SK-N-SH (cell line): ENCODE measurements at regions of chr3 and their contacts with region 1.

Region 1: GRCh38 chr3:45224824-45225464 is 1.1 kb downstream of the TMEM158 start:
- DNase-seq: peak; percentile 95
- H3K4me3 ChIP-seq: peak overlapping the region; percentile 68 to 86
- H3K27ac ChIP-seq: peak overlapping the region in 1 of 2 experiments; percentile 71; a peak in 2 of 4 replicates
- H3K4me1 ChIP-seq: peaks cover 0 to 7% of the 10 kb centered on the region in 2 experiments; a peak in 3 of 4 replicates
- H3K27me3 ChIP-seq: no peaks in the 10 kb centered on the region
- CTCF ChIP-seq: peak; percentile 59
- EP300 ChIP-seq: 0 out of 4 replicates have a peak, but pooled peaks of 1 of the 2 experiments have one; percentile 19
- RAD21 ChIP-seq: peak; percentile 88

Region 2: DNA sequence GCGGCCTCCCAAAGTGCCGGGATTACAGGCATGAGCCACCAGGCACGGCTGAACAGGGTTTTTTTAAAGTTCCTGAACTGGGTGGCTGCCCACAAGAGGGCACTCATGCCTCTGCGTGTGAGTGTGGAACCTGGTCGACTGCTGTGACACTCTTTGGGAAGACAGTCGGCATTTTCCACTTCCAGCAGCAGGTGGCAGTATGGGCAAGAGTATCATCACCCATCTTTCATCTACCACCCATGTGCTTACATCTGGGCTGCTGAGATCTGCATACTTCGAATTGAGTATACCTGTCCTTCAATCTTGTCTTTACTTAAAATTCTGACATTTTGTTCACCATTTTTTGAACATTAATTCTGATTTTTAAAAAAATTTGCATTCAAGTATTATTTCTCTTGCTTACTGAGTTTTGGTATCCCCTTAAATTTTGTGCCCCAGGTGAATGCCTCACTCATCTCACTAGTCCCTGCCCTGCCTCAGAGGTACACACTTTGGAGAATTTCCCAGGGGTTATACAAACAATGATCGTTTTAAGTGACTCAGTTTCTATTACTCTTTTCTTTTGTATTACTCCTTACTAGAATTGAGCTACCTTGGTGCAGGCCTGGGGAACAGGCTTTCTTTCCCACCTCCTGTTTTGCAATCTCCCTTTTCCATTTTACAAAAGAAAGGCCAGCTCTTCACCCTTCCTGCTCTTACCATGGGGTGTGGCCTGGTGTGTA is 187.0 kb before region 1 on chr3:
- CTCF ChIA-PET with region 1: interaction called, 631 read pairs
- POLR2A ChIA-PET with region 1: no interaction called
- DNase-seq: peak; percentile 90
- H3K4me3 ChIP-seq: peak overlapping the region in 1 of 2 experiments; percentile 32; a peak in 1 of 4 replicates
- H3K27ac ChIP-seq: no peak overlapping the region
- H3K4me1 ChIP-seq: no peaks in the 10 kb centered on the region; a peak in 1 of 4 replicates
- H3K27me3 ChIP-seq: no peaks in the 10 kb centered on the region
- CTCF ChIP-seq: peak; percentile 98
- EP300 ChIP-seq: no peak
- RAD21 ChIP-seq: peak; percentile 96

Region 3: GRCh38 chr3:45092132-45093031 is 132.6 kb before region 1 on chr3:
- CTCF ChIA-PET with region 1: no interaction called
- POLR2A ChIA-PET with region 1: no interaction called
- DNase-seq: no peak
- H3K4me3 ChIP-seq: no peak overlapping the region
- H3K27ac ChIP-seq: peak overlapping the region in 1 of 2 experiments; percentile 50; a peak in 3 of 4 replicates
- H3K4me1 ChIP-seq: no peaks in the 10 kb centered on the region
- H3K27me3 ChIP-seq: no peaks in the 10 kb centered on the region
- CTCF ChIP-seq: peak; percentile 16; the same call in 1 of the 2 replicates
- EP300 ChIP-seq: 0 out of 4 replicates have a peak, but pooled peaks of 1 of the 2 experiments have one; percentile 29
- RAD21 ChIP-seq: no peak

Region 4: DNA sequence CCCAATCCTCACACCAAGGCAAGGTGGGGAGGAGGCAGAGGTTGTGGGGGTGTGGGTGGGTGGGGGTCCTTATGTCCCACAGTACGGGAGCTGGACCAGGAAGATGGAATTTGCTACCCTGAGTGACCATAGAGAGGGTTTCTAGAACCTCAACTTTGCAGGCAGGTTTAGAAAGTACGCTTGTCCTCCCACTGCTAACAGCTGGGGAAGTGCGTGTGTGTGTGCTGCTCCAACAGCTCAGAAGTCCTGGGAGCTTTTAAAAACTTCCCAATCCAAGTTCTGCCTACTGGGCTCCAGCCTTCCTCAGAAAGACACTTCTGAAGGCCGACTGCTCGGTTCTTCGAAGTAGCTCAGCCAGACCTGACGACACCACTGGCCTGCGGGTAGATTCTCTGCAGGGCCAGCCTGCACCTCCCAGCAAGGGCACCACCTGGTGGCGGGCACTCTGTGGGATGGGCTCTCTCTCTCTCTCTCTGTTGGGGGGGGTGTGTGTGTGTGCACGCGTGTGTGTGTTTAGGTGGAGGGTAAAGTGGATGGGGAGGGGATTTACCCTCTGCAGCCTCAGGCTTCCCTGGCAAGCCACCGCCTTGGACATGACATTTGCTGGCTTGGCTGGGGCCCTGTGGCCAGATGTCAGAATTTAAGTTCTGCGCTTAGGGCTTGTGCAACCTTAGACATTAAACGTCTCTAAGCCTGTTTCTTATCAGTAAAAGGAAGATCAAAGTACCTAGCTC is 14.5 kb before region 1 on chr3:
- CTCF ChIA-PET with region 1: interaction called, 51 read pairs
- POLR2A ChIA-PET with region 1: no interaction called
- DNase-seq: peak; percentile 75
- H3K4me3 ChIP-seq: no peak overlapping the region; a peak in 1 of 4 replicates
- H3K27ac ChIP-seq: no peak overlapping the region
- H3K4me1 ChIP-seq: peaks cover 0 to 9% of the 10 kb centered on the region in 2 experiments; a peak in 1 of 4 replicates
- H3K27me3 ChIP-seq: no peaks in the 10 kb centered on the region
- CTCF ChIP-seq: peak; percentile 89
- EP300 ChIP-seq: no peak; a peak in 1 of 4 replicates
- RAD21 ChIP-seq: peak; percentile 81

Region 5: DNA sequence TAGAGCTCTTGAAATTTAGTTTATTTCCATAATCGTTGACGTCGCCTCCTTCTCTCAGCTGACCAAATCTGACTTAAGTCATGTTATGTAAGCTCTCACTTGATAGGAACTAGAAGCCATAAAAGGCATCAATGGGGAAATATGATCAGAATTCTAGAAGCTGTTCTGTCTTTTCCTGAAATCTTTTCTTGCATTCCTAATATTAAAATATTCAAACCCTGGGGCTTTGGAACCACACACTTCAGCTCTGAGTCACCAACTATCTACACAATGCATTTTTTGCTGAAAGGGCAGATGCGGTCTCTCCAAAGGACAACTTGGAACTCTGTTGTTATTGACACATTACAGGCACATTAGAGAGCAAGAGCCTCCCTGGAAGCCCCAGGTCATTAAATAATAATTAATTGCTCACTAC is 254.7 kb after region 1 on chr3:
- CTCF ChIA-PET with region 1: interaction called, 15 read pairs
- POLR2A ChIA-PET with region 1: no interaction called
- DNase-seq: no peak
- H3K4me3 ChIP-seq: no peak overlapping the region
- H3K27ac ChIP-seq: peak overlapping the region; percentile 15 to 28; a peak in 2 of 4 replicates
- H3K4me1 ChIP-seq: peaks cover 0 to 6% of the 10 kb centered on the region in 2 experiments; a peak in 2 of 4 replicates
- H3K27me3 ChIP-seq: no peaks in the 10 kb centered on the region
- CTCF ChIP-seq: no peak
- EP300 ChIP-seq: no peak
- RAD21 ChIP-seq: no peak

Region 6: DNA sequence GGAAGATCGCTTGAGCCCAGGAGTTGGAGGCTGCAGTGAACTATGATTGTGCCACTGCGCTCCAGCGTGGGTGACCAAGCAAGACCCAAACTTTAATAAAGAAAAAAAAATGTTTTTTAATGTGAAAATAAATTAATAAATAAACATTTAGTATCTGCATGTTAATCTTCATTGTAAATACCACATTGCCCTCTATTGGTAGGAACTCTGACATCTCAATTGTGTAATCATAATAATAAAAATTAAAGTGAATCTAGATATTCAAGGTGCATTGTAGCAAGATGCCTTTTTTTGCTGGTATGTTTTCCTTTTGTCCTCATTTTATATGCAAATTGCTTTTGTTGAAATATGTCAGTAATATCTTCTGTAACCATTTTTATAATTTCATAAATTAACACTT is 274.6 kb after region 1 on chr3:
- CTCF ChIA-PET with region 1: interaction called, 100 read pairs
- POLR2A ChIA-PET with region 1: interaction called, 4 read pairs
- DNase-seq: peak; percentile 51
- H3K4me3 ChIP-seq: no peak overlapping the region
- H3K27ac ChIP-seq: no peak overlapping the region
- H3K4me1 ChIP-seq: no peaks in the 10 kb centered on the region
- H3K27me3 ChIP-seq: no peaks in the 10 kb centered on the region
- CTCF ChIP-seq: peak; percentile 68
- EP300 ChIP-seq: no peak
- RAD21 ChIP-seq: peak; percentile 71

Region 7: DNA sequence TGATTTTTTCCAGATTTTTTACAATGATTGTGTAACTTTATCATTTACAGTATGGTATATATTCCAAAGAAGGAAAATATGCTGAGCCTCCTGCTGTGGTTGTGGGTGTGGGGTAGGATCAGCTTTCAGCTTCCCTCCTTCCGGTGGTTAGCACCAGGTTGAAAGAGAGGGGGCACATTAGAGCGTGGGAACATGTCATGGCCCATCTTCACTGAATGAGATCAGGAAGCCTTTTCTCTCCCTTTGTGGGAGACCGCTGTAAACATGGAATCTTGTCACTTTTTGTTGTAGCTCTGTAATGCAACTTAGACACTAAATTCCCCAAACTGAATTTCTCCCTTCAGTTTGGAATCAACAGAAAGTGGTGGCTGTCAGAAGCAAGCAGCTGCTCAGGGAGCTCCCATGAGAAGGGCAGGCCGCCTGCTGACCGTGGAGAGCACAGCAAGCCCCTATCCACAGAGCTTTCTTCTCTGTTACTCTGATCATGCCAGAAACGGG is 282.9 kb after region 1 on chr3:
- CTCF ChIA-PET with region 1: interaction called, 100 read pairs
- POLR2A ChIA-PET with region 1: no interaction called
- DNase-seq: peak; percentile 30
- H3K4me3 ChIP-seq: peak overlapping the region in 1 of 2 experiments; percentile 5; a peak in 1 of 4 replicates
- H3K27ac ChIP-seq: peak overlapping the region in 1 of 2 experiments; percentile 76; a peak in 2 of 4 replicates
- H3K4me1 ChIP-seq: peaks cover 2 to 30% of the 10 kb centered on the region in 2 experiments; a peak in 3 of 4 replicates
- H3K27me3 ChIP-seq: no peaks in the 10 kb centered on the region
- CTCF ChIP-seq: peak; percentile 48
- EP300 ChIP-seq: no peak
- RAD21 ChIP-seq: peak; percentile 43